GM12878 (cell line): ENCODE measurements at regions of chr7 and their contacts with region 1.

Region 1: GRCh38 chr7:7816084-7816483 is 97.7 kb upstream of the RPA3 start:
- DNase-seq: peak; percentile 85
- ATAC-seq: peak; percentile 53
- H3K4me3 ChIP-seq: peak overlapping the region; percentile 32
- H3K27ac ChIP-seq: peak overlapping the region; percentile 67
- H3K4me1 ChIP-seq: peaks cover 43% of the 10 kb centered on the region
- H3K27me3 ChIP-seq: no peaks in the 10 kb centered on the region
- CTCF ChIP-seq: no peak
- EP300 ChIP-seq: peak; percentile 73 to 92
- POLR2A ChIP-seq: 0 out of 2 replicates have a peak, but pooled peaks have one; percentile 29
- RAD21 ChIP-seq: no peak

Region 2: DNA sequence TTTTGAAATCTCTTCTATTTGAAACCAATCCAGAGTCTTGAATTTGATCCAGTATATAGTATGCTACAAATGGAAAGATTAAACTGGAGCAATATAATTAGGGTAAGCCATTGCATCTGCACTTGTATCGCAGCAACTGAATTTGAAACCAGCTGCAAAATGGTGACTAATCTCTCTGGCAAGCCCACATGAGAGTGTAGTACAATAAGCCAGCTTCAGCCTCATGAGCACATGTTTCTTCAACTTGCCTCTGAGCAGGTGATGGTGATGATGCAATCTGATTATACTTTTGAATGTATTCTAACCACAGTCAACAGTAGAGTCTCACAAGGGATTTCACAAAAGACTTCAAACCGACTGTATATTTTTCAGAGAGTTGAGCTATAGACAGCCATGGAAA is 96.8 kb before region 1 on chr7:
- CTCF ChIA-PET with region 1: no interaction called
- POLR2A ChIA-PET with region 1: no interaction called
- RAD21 ChIA-PET with region 1: interaction called, 11 read pairs
- SMC1A ChIA-PET with region 1: interaction called, 6 read pairs
- in situ Hi-C with region 1: no loop called
- intact Hi-C with region 1: no loop called
- DNase-seq: peak; percentile 77
- ATAC-seq: peak; percentile 96
- H3K4me3 ChIP-seq: no peak overlapping the region
- H3K27ac ChIP-seq: peak overlapping the region; percentile 29; the same call in 1 of the 2 replicates
- H3K4me1 ChIP-seq: peaks cover 20% of the 10 kb centered on the region; the same call in 1 of the 2 replicates
- H3K27me3 ChIP-seq: no peaks in the 10 kb centered on the region
- CTCF ChIP-seq: no peak
- EP300 ChIP-seq: peak; percentile 74 to 80; a peak in 3 of 4 replicates
- POLR2A ChIP-seq: peak; percentile 37; the same call in 1 of the 2 replicates
- RAD21 ChIP-seq: peak; percentile 18; the same call in 1 of the 2 replicates

Region 3: GRCh38 chr7:7799138-7799537 is 16.9 kb before region 1 on chr7:
- CTCF ChIA-PET with region 1: interaction called, 6 read pairs
- POLR2A ChIA-PET with region 1: interaction called, 7 read pairs
- RAD21 ChIA-PET with region 1: interaction called, 7 read pairs
- SMC1A ChIA-PET with region 1: interaction called, 10 read pairs
- in situ Hi-C with region 1: no loop called
- intact Hi-C with region 1: no loop called
- DNase-seq: no peak
- ATAC-seq: no peak
- H3K4me3 ChIP-seq: no peak overlapping the region
- H3K27ac ChIP-seq: no peak overlapping the region
- H3K4me1 ChIP-seq: no peaks in the 10 kb centered on the region
- H3K27me3 ChIP-seq: no peaks in the 10 kb centered on the region
- CTCF ChIP-seq: no peak
- EP300 ChIP-seq: no peak
- POLR2A ChIP-seq: no peak
- RAD21 ChIP-seq: no peak

Region 4: DNA sequence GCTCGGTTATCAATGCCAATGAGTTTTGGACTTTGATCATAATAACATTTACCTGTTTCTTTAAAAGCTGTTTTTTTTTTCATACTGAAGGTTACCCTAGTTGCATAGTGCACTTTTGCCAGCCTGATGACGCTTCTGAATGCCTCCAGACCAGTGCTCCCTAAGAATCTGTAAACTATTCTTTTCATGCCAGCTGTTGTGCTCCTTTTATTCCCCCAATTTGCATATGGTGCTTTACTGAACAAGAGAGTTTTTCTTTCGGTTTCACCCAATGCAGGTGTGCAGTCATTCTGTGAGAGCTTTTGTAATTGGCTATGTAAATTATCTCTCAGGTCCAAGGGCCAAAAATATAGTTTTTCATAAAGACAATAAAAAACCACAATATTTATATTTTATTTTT is 104.4 kb after region 1 on chr7:
- CTCF ChIA-PET with region 1: interaction called, 10 read pairs
- POLR2A ChIA-PET with region 1: interaction called, 10 read pairs
- RAD21 ChIA-PET with region 1: interaction called, 43 read pairs
- SMC1A ChIA-PET with region 1: interaction called, 36 read pairs
- in situ Hi-C with region 1: no loop called
- intact Hi-C with region 1: loop called (anchors 2 kb)
- DNase-seq: peak; percentile 76
- ATAC-seq: peak; percentile 93
- H3K4me3 ChIP-seq: no peak overlapping the region; the same call in 1 of the 2 replicates
- H3K27ac ChIP-seq: no peak overlapping the region; the same call in 1 of the 2 replicates
- H3K4me1 ChIP-seq: peaks cover 50% of the 10 kb centered on the region
- H3K27me3 ChIP-seq: no peaks in the 10 kb centered on the region
- CTCF ChIP-seq: no peak
- EP300 ChIP-seq: peak; percentile 82 to 91; a peak in 2 of 4 replicates
- POLR2A ChIP-seq: no peak
- RAD21 ChIP-seq: peak; percentile 11; the same call in 1 of the 2 replicates

Region 5: DNA sequence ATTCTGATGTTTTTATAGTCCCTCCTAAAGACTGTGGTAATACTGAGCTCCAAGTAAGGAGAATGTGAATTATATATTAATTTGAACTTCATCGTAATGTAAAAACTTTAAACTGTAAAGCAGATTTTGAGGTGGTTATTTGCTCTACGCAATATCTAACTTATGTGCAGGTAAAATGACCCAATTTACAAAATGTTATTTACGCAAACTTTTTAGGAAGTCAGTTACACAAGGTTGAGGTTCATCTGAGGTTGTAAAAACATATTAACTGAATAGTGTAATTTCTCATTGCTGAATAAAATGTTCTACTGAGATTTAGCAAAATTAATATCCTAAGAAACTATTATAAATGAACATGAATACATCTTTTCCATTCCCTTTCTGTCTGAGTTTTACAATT is 168.3 kb after region 1 on chr7:
- CTCF ChIA-PET with region 1: no interaction called
- POLR2A ChIA-PET with region 1: no interaction called
- RAD21 ChIA-PET with region 1: no interaction called
- SMC1A ChIA-PET with region 1: no interaction called
- in situ Hi-C with region 1: no loop called
- intact Hi-C with region 1: no loop called
- DNase-seq: no peak
- ATAC-seq: no peak
- H3K4me3 ChIP-seq: no peak overlapping the region
- H3K27ac ChIP-seq: no peak overlapping the region
- H3K4me1 ChIP-seq: peaks cover 6% of the 10 kb centered on the region; the same call in 1 of the 2 replicates
- H3K27me3 ChIP-seq: no peaks in the 10 kb centered on the region
- CTCF ChIP-seq: no peak
- EP300 ChIP-seq: no peak
- POLR2A ChIP-seq: no peak
- RAD21 ChIP-seq: no peak

Region 6: GRCh38 chr7:8115547-8116402 is 299.7 kb after region 1 on chr7:
- CTCF ChIA-PET with region 1: no interaction called
- POLR2A ChIA-PET with region 1: no interaction called
- RAD21 ChIA-PET with region 1: interaction called, 4 read pairs
- SMC1A ChIA-PET with region 1: interaction called, 3 read pairs
- in situ Hi-C with region 1: no loop called
- intact Hi-C with region 1: loop called (anchors 5 kb)
- DNase-seq: peak; percentile 98
- ATAC-seq: peak; percentile 85
- H3K4me3 ChIP-seq: no peak overlapping the region
- H3K27ac ChIP-seq: peak overlapping the region; percentile 56
- H3K4me1 ChIP-seq: peaks cover 43% of the 10 kb centered on the region
- H3K27me3 ChIP-seq: no peaks in the 10 kb centered on the region
- CTCF ChIP-seq: no peak
- EP300 ChIP-seq: peak; percentile 77 to 93; a peak in 2 of 4 replicates
- POLR2A ChIP-seq: no peak
- RAD21 ChIP-seq: peak; percentile 30; the same call in 1 of the 2 replicates

Region 7: DNA sequence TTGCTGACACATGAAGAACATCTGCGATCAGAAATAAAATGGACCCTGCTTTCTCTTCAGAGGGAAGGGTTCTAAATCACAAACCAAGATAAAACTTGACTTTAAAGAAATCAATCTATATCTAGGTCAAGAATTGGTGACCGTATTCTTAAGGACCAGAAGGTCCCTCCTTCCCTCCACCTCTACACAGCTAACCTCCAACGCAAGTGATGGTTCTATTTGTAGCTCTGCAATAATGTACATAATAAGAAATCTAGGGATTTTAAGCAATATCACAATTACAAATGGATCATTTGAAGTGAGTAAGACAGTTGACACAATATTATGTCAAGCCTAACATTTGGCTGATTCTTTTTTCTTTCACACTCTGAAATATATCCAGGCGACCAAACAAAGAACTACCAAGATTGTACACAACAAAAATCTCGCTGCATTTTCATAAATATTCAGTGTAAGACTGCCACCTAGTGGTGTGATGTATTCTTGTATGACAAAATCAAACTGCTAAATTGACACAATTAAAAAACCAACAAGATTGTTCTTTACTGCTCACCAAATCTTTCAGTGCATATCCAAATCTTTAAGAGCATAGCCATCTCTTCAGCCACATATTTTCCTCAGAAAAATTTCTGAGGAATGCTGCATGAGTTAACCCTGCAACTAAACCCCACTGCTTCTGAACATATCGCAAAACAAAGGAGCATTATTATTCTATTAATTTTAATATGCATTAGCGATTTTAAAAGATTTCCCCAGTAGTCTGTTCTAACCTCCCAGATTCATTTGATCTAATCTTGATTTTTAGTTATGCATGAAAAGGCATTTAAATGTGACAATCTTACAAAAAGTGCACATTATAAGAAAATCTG is 401.4 kb after region 1 on chr7:
- CTCF ChIA-PET with region 1: interaction called, 3 read pairs
- POLR2A ChIA-PET with region 1: no interaction called
- RAD21 ChIA-PET with region 1: interaction called, 3 read pairs
- SMC1A ChIA-PET with region 1: no interaction called
- in situ Hi-C with region 1: no loop called
- intact Hi-C with region 1: loop called (anchors 5 kb)
- DNase-seq: peak; percentile 43
- ATAC-seq: peak; percentile 80
- H3K4me3 ChIP-seq: no peak overlapping the region
- H3K27ac ChIP-seq: no peak overlapping the region
- H3K4me1 ChIP-seq: no peaks in the 10 kb centered on the region
- H3K27me3 ChIP-seq: no peaks in the 10 kb centered on the region
- CTCF ChIP-seq: peak; percentile 42 to 67 (median 45); a peak in 4 of 6 replicates
- EP300 ChIP-seq: no peak
- POLR2A ChIP-seq: no peak
- RAD21 ChIP-seq: peak; percentile 81

Region 8: GRCh38 chr7:8249121-8249520 is 433.0 kb after region 1 on chr7:
- CTCF ChIA-PET with region 1: no interaction called
- POLR2A ChIA-PET with region 1: no interaction called
- RAD21 ChIA-PET with region 1: no interaction called
- SMC1A ChIA-PET with region 1: no interaction called
- in situ Hi-C with region 1: no loop called
- intact Hi-C with region 1: no loop called
- DNase-seq: no peak
- ATAC-seq: no peak
- H3K4me3 ChIP-seq: no peak overlapping the region
- H3K27ac ChIP-seq: no peak overlapping the region
- H3K4me1 ChIP-seq: no peaks in the 10 kb centered on the region
- H3K27me3 ChIP-seq: no peaks in the 10 kb centered on the region; a peak in 1 of 4 replicates
- CTCF ChIP-seq: no peak
- EP300 ChIP-seq: no peak
- POLR2A ChIP-seq: no peak
- RAD21 ChIP-seq: no peak